H1 (cell line): ENCODE measurements at regions of chr5 and their contacts with region 1.

Region 1: GRCh38 chr5:172666251-172666650 is 25.2 kb downstream of the NEURL1B start:
- DNase-seq: peak in 1 of 2 experiments; percentile 61
- H3K4me3 ChIP-seq: no peak overlapping the region
- H3K27ac ChIP-seq: no peak overlapping the region
- H3K4me1 ChIP-seq: no peaks in the 10 kb centered on the region
- H3K27me3 ChIP-seq: no peaks in the 10 kb centered on the region; a peak in 1 of 7 replicates
- CTCF ChIP-seq: peak; percentile 26 to 70 (median 63)
- EP300 ChIP-seq: no peak
- POLR2A ChIP-seq: no peak
- RAD21 ChIP-seq: peak; percentile 58 to 81

Region 2: GRCh38 chr5:172473427-172473826 is 192.8 kb before region 1 on chr5:
- CTCF ChIA-PET with region 1: interaction called, 13 read pairs
- POLR2A ChIA-PET with region 1: no interaction called
- DNase-seq: no peak
- H3K4me3 ChIP-seq: no peak overlapping the region
- H3K27ac ChIP-seq: no peak overlapping the region
- H3K4me1 ChIP-seq: no peaks in the 10 kb centered on the region
- H3K27me3 ChIP-seq: no peaks in the 10 kb centered on the region
- CTCF ChIP-seq: no peak
- EP300 ChIP-seq: no peak
- POLR2A ChIP-seq: no peak
- RAD21 ChIP-seq: no peak

Region 3: DNA sequence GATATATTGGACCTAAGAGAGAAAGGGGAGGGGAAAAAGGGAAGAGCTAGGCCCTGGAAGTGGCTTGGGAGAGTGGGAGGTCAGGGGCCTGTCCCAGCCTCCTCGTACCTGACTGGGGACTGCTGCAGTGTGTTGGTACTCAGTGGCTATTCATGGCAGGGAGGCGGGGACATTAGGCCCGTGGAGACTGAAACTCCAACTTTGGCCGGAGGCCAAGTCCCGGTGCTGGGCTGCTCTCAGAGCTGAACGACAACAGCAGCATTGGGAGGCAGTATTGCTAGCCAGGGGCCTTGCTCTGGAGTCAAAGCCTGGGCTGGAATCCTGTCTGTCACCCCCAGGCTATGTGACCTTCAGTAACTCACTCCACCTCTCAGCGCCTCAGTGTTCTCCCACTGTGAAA is 12.7 kb after region 1 on chr5:
- CTCF ChIA-PET with region 1: interaction called, 113 read pairs
- POLR2A ChIA-PET with region 1: interaction called, 8 read pairs
- DNase-seq: no peak
- H3K4me3 ChIP-seq: no peak overlapping the region
- H3K27ac ChIP-seq: no peak overlapping the region
- H3K4me1 ChIP-seq: peaks cover 0 to 9% (median 2%) of the 10 kb centered on the region in 4 experiments; a peak in 5 of 7 replicates
- H3K27me3 ChIP-seq: peaks cover 4 to 20% (median 15%) of the 10 kb centered on the region in 4 experiments
- CTCF ChIP-seq: no peak
- EP300 ChIP-seq: no peak
- POLR2A ChIP-seq: no peak
- RAD21 ChIP-seq: no peak

Region 4: GRCh38 chr5:172688349-172689217 is 22.3 kb after region 1 on chr5:
- CTCF ChIA-PET with region 1: interaction called, 176 read pairs
- POLR2A ChIA-PET with region 1: interaction called, 8 read pairs
- DNase-seq: no peak
- H3K4me3 ChIP-seq: no peak overlapping the region
- H3K27ac ChIP-seq: no peak overlapping the region
- H3K4me1 ChIP-seq: peaks cover 0 to 7% (median 0%) of the 10 kb centered on the region in 4 experiments; a peak in 2 of 7 replicates
- H3K27me3 ChIP-seq: peaks cover 5 to 20% (median 16%) of the 10 kb centered on the region in 4 experiments
- CTCF ChIP-seq: no peak
- EP300 ChIP-seq: no peak
- POLR2A ChIP-seq: no peak
- RAD21 ChIP-seq: no peak